ENCODE measurements at regions of chr12 and their contacts with region 1.

Region 1: DNA sequence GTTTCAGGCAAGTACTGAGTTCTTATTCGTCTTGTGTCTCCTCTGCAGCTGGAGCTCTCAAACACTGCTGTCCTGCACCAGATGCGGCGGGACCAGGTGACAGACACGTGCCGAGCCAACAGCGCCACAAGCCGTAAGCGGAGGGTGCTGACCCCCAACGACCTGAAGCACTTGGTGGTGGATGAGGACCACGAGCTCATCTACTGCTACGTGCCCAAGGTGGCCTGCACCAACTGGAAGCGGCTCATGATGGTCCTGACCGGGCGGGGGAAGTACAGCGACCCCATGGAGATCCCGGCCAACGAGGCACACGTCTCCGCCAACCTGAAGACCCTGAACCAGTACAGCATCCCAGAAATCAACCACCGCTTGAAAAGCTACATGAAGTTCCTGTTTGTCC is 201.2 kb downstream of the SLC41A2 start:
- DNase-seq: no peak
- H3K4me3 ChIP-seq: no peak overlapping the region
- H3K4me3 Mint-ChIP-seq: no peak overlapping the region
- H3K27ac ChIP-seq: no peak overlapping the region
- H3K27ac Mint-ChIP-seq: peak overlapping the region in 2 of 7 donors; percentile 0 to 37
- H3K4me1 ChIP-seq: peaks cover 13 to 14% of the 10 kb centered on the region in 2 donors
- H3K4me1 Mint-ChIP-seq: peaks cover 22% of the 10 kb centered on the region
- H3K27me3 ChIP-seq: no peaks in the 10 kb centered on the region
- H3K27me3 Mint-ChIP-seq: peaks cover 0 to 3% (median 2%) of the 10 kb centered on the region in 3 donors
- CTCF ChIP-seq: no peak

Region 2: DNA sequence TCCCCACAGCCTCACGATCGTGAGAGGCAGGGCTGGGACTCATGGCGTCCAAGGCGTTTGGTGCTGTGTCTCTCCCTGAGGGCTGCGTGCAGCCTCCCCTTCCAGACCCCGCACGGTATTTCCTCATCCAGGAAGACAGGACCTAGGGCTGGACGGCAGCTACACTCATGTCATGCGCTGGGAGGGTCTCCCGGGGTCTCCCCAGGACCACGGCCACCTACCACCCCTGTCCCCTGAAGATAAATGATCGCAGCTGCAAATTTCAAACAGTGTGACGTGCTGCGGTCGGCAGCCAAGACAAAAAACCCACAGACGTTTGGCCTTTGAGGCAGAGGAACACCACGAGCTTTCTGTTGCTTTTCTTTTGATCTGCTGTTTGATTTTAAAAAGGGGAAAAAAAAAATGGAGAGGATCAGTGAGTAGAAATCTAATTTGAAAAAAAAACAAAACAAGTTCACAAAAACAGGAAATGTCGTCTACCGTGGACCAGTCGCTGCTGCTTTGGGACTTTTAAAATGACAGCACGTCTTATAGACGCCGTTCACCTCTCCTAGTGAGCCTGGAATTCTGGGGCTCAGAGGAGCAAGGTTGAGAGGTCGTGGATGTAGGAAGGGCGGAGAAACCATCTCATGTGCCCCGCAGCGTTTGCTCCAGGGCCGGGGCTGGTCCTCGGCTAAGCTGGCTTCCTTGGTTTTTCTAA is 36.4 kb before region 1 on chr12:
- intact Hi-C with region 1: loop called in 1 of 2 experiments (anchors 5 kb)
- DNase-seq: peak; percentile 34 to 53 (median 47)
- H3K4me3 ChIP-seq: peak overlapping the region; percentile 42 to 83 (median 57)
- H3K4me3 Mint-ChIP-seq: peak overlapping the region; percentile 80 to 95
- H3K27ac ChIP-seq: peak overlapping the region; percentile 90 to 99
- H3K27ac Mint-ChIP-seq: peak overlapping the region; percentile 91 to 98 (median 96)
- H3K4me1 ChIP-seq: peaks cover 16 to 28% of the 10 kb centered on the region in 2 donors
- H3K4me1 Mint-ChIP-seq: peaks cover 33% of the 10 kb centered on the region
- H3K27me3 ChIP-seq: no peaks in the 10 kb centered on the region
- H3K27me3 Mint-ChIP-seq: no peaks in the 10 kb centered on the region
- CTCF ChIP-seq: no peak

Region 3: DNA sequence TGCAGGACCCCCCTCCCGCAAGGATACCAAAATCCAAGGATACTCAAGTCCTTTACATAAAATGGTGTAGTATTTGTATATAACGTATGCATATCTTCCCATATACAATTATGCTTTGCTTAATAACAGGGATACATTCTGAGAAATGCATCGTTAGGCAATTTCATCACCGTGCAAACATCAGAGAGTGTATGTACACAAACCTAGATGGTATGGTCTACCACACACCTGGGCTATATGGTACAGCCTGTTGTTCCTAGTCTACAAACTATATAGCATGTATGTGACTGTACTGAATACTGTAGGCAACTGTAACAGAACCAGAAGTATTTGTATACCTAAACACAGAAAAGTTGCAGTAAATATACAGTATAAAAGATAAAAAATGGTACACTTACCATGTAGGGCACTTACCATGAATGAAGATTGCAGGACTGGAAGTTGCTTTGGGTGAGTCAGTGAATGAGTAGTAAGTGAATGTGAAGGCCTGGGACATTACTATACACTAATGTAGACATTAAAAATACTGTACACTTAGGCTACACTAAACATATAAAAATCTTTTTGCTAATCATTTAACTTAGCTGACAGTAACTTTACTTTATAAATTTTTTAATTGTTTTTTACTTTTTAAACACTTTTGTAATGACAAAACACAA is 60.1 kb after region 1 on chr12:
- intact Hi-C with region 1: loop called in 1 of 2 experiments (anchors 2 kb)
- DNase-seq: no peak
- H3K4me3 ChIP-seq: no peak overlapping the region
- H3K4me3 Mint-ChIP-seq: no peak overlapping the region
- H3K27ac ChIP-seq: no peak overlapping the region
- H3K27ac Mint-ChIP-seq: no peak overlapping the region
- H3K4me1 ChIP-seq: no peaks in the 10 kb centered on the region
- H3K4me1 Mint-ChIP-seq: peaks cover 2% of the 10 kb centered on the region
- H3K27me3 ChIP-seq: no peaks in the 10 kb centered on the region
- H3K27me3 Mint-ChIP-seq: no peaks in the 10 kb centered on the region
- CTCF ChIP-seq: no peak